ENCODE measurements at regions of chr20 and their contacts with region 1.

Region 1: GRCh38 chr20:36264426-36265246 is 28.4 kb downstream of the AAR2 start:
- DNase-seq: no peak
- H3K4me3 ChIP-seq: no peak overlapping the region
- H3K27ac ChIP-seq: no peak overlapping the region
- H3K4me1 ChIP-seq: no peaks in the 10 kb centered on the region
- H3K27me3 ChIP-seq: no peaks in the 10 kb centered on the region
- CTCF ChIP-seq: no peak

Region 2: GRCh38 chr20:36285746-36286447 is 21.3 kb after region 1 on chr20:
- CTCF ChIA-PET with region 1: no interaction called
- POLR2A ChIA-PET with region 1: no interaction called
- intact Hi-C with region 1: no loop called
- DNase-seq: no peak
- H3K4me3 ChIP-seq: no peak overlapping the region
- H3K27ac ChIP-seq: no peak overlapping the region
- H3K4me1 ChIP-seq: no peaks in the 10 kb centered on the region
- H3K27me3 ChIP-seq: peaks cover 82% of the 10 kb centered on the region
- CTCF ChIP-seq: no peak

Region 3: GRCh38 chr20:36521526-36521925 is 256.9 kb after region 1 on chr20:
- CTCF ChIA-PET with region 1: interaction called, 12 read pairs
- POLR2A ChIA-PET with region 1: no interaction called
- intact Hi-C with region 1: no loop called
- DNase-seq: no peak
- H3K4me3 ChIP-seq: no peak overlapping the region
- H3K27ac ChIP-seq: no peak overlapping the region
- H3K4me1 ChIP-seq: no peaks in the 10 kb centered on the region
- H3K27me3 ChIP-seq: no peaks in the 10 kb centered on the region
- CTCF ChIP-seq: no peak